Activated CD4-positive, alpha-beta memory T cell treated with anti-CD3 and anti-CD28 coated beads, Interleukin-2, amount 10 ng/mL, durations not matched to agents 7 days and 5 days (primary cell): ENCODE measurements at regions of chr6 and their contacts with region 1.

Region 1: DNA sequence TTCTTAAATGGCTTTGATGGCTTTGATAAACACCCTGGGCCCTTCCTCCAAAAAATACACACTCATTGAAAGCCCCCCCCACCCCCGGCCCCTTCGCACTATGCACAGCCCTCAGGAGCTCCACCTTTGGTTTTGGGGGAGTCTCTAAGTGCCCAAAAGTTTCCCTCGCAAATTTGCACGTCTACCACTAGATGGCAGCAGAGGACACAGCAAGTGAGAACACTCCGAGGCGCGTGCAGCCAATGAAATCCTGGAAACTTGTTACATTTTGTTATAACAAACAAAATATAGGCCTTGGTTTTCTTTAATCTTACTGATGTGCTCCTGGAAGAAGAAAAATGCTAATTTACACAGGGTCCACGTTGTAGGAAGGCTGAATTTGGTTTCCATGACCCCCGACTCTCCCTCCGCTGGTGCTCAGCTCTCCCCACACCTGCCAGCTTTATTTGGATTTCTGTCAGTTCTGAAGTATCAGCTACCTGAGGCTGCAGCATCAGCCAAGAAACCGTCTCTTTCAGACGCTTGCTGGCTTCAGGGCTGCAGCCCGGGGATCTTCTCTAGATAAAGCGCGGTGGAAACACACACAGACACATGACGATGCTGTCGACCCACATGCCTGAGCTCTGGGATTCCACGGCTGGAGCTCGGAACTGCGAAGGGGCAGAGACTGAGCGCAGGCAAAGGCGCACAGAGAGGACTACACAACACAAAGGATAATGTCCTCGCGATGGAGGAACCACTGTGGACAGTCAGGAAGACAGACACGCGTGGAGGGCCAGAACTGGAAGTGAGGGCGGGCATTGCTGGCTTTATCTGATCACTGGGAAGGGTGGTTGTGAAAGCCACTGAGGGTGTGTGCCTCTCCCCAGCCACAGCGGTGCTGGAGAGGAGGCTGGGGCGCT is 148.4 kb upstream of the RPS6KA2 start:
- DNase-seq: peak; percentile 63
- H3K4me3 Mint-ChIP-seq: no peak overlapping the region
- H3K27ac Mint-ChIP-seq: no peak overlapping the region
- H3K4me1 Mint-ChIP-seq: peaks cover 3% of the 10 kb centered on the region
- H3K27me3 Mint-ChIP-seq: peaks cover 14% of the 10 kb centered on the region

Region 2: DNA sequence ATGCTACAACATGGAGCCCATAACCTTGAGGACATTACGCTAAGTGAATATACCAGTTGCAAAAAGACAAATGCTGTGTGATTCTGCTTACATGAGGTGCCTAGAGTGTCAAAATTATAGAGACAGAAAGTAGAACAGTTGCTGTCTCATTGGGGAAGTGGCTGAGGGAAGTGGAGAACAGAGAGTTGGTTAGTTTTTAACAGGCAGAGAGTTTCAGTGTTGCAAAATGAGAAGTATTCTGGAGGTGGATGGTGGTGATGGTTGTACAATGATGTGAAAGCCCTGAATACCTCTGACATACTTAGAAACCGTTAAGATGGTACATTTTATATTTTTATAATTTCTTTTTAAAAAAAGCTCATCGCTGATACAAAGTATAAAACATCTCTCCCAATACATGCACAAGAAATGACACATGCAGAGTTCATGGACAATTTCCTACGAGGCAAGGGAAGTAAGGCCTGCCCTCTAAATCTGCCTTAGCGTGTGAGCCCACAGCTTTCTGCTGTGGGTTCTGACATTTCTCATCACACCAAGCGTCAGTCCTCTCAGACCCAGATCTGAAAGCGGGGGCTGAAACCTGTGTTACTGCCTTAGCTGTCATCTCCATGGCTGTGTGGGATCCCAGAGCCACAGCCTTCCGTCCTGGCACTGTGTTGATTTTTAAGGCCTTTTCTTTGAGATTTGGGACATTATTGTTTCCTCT is 54.9 kb after region 1 on chr6:
- CTCF ChIA-PET with region 1: no interaction called
- POLR2A ChIA-PET with region 1: no interaction called
- DNase-seq: no peak
- H3K4me3 Mint-ChIP-seq: no peak overlapping the region
- H3K27ac Mint-ChIP-seq: no peak overlapping the region
- H3K4me1 Mint-ChIP-seq: peaks cover 13% of the 10 kb centered on the region
- H3K27me3 Mint-ChIP-seq: no peaks in the 10 kb centered on the region

Region 3: DNA sequence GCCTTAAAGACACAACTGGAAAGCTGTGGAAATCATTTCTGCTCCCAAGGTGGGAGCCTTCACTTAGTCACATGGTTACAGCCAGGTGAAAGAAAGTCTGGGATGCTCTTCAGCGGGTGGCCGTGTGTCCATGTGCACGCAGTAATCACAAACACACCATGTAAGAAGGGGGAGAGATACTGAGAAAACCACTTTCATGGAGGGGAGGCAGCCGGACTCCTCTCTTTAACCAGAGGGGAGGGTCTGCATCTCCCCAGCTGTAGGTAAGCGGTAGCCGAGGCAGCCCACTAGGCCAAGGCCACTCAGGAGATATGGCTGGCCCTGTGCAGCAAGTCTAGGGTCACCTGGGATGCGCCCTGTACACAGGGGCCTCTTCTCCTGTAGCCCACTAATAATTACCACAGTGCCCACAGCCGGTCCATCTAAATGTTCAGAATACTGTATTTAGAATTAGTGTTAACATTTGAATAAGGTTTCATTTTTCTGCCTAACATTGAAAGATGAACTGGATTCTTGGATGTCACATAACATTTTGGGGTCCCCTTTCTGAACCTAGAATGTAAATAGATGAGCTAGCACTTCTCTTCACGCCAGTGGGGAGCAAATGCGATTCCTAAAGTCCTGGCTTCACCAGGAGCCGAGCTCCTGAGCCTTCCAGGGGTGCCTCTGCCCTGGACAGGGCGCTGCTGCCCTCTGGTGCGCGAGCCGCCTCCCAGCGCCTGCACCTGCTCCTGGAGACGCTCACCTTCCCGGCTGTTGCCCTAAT is 366.4 kb after region 1 on chr6:
- CTCF ChIA-PET with region 1: interaction called, 15 read pairs
- POLR2A ChIA-PET with region 1: no interaction called
- DNase-seq: peak; percentile 57
- H3K4me3 Mint-ChIP-seq: no peak overlapping the region
- H3K27ac Mint-ChIP-seq: no peak overlapping the region
- H3K4me1 Mint-ChIP-seq: peaks cover 22% of the 10 kb centered on the region
- H3K27me3 Mint-ChIP-seq: no peaks in the 10 kb centered on the region